Posterior vena cava (tissue), 2 donors: ENCODE measurements at regions of chr11 and their contacts with region 1.

Region 1: GRCh38 chr11:460331-461199 is 10.5 kb downstream of the PTDSS2 start:
- DNase-seq: peak; percentile 58

Region 2: DNA sequence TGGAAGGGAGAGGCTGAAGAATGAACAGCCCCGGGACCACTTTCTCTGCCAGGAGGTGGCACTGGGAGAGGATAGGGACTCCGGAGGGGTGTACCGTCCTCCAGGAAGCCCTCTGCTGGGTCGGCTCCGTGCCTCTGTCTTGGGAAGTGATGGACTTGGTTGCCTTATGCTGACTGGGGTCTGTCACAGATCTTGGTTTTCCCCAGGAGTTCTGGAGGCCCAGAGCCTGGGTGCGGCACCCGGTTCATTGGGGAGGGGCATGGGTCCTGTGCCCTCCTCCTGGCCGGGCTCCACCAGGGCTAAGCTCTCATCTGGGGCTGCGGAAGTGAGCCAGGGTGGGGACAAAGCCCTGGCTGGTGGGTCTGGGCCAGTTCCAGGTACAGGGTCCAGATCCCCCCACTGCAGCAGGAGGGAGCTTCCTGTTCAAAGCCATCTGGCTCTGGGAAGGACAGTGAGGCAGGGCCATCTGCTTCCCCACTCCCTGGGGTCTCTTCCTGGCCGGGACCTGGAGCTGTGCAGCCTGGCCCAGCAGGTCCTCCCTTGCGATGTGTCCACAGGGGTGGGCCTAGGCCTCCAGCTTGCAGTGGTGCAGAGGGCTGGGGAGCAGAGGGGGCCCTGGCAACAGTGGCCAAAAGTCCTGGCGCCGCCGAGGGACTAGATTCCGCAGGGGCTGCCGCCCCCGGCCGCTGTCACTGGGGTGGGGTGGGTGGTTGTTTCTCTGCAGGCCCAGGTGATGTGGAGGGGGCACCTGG is 464.0 kb after region 1 on chr11:
- intact Hi-C with region 1: loop called in 1 of 2 experiments (anchors 5 kb)
- DNase-seq: no peak